Activated CD4-positive, alpha-beta T cell treated with anti-CD3 and anti-CD28 coated beads for 36 hours (primary cell): ENCODE measurements at regions of chrX and their contacts with region 1.

Region 1: DNA sequence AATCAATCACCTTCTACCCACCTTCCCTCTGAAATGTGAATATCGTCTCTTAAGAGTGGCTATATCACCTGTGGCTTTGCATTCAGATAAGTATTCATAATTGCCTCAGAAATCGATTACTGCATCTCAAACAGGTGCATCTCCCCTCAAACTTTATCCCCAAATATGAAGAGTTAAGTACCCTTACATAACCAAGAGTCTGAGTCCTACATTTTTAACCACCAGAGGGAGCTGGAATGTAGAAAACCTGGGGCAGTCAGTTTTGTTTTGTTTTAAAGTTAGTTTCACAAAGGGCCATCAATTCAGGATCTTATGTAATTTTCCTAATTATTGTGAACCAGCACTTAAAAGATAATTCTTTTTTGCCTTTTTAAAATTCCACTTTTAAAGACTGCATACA is 5.7 kb downstream of the TCEANC start:
- DNase-seq: no peak
- ATAC-seq: no peak
- H3K4me3 Mint-ChIP-seq: no peak overlapping the region
- H3K27ac Mint-ChIP-seq: no peak overlapping the region
- H3K4me1 Mint-ChIP-seq: peaks cover 36% of the 10 kb centered on the region
- H3K27me3 Mint-ChIP-seq: no peaks in the 10 kb centered on the region

Region 2: DNA sequence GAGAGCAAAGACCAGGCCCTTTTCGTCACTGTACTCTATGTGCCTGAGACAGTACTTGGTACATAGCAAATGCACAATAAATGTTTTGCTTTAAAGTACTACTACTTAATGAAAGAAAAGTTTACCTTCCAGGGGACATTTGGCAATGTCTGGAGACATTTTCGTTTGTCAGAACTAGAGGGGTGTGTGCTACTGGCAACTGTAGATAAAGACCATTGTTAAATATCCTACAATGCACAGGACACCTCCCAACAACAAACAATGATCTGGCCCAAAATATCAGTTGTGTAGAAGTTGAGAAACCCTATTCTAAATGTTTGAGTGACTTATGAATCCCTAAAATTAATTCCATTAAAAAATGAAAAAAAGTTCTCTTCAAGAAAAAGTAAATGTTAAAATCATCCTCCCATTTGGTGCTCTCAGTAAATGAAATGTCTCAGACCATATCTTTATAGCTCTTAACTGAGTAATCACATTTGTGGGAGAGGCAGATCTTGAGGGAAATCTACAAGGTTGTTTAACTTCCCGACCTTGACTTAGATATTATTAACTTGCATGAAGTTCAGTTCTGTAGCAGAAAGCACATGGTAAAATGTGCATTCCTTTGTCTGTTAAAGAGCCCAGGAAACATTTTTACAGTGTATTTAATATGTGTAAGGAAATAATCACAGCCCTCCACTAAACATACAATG is 70.7 kb before region 1 on chrX:
- CTCF ChIA-PET with region 1: no interaction called
- POLR2A ChIA-PET with region 1: no interaction called
- intact Hi-C with region 1: no loop called
- DNase-seq: no peak
- ATAC-seq: no peak
- H3K4me3 Mint-ChIP-seq: no peak overlapping the region
- H3K27ac Mint-ChIP-seq: no peak overlapping the region
- H3K4me1 Mint-ChIP-seq: no peaks in the 10 kb centered on the region
- H3K27me3 Mint-ChIP-seq: peaks cover 8% of the 10 kb centered on the region

Region 3: GRCh38 chrX:13669246-13669737 is 10.7 kb after region 1 on chrX:
- CTCF ChIA-PET with region 1: interaction called, 3 read pairs
- POLR2A ChIA-PET with region 1: no interaction called
- intact Hi-C with region 1: loop called (anchors 1 kb)
- DNase-seq: peak; percentile 76
- ATAC-seq: peak; percentile 93
- H3K4me3 Mint-ChIP-seq: peak overlapping the region; percentile 51
- H3K27ac Mint-ChIP-seq: peak overlapping the region; percentile 93
- H3K4me1 Mint-ChIP-seq: peaks cover 11% of the 10 kb centered on the region
- H3K27me3 Mint-ChIP-seq: no peaks in the 10 kb centered on the region

Region 4: DNA sequence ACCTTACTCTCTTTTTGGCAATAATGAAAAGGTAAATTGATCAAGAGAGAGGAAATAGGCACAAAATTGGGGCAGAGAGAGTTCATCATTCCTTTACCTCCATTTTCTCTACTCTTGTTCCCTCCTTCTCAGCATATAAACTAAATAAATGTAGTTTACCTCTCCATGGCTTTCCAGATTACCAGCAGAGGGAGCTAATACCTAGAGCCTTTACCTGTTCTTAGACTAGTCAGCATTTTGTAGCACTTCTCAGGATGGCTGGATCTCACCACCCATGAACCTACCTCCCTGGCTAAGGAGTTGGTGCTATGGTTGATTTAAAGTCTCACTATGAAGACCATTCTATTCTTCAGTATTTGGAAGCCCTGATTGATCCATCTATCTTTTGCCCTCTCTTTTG is 91.6 kb after region 1 on chrX:
- CTCF ChIA-PET with region 1: interaction called, 5 read pairs
- POLR2A ChIA-PET with region 1: no interaction called
- intact Hi-C with region 1: loop called in 1 of 2 experiments (anchors 2 kb)
- DNase-seq: peak; percentile 10
- ATAC-seq: peak; percentile 65
- H3K4me3 Mint-ChIP-seq: no peak overlapping the region
- H3K27ac Mint-ChIP-seq: peak overlapping the region; percentile 25
- H3K4me1 Mint-ChIP-seq: peaks cover 18% of the 10 kb centered on the region
- H3K27me3 Mint-ChIP-seq: no peaks in the 10 kb centered on the region